CD4-positive, alpha-beta T cell (primary cell): ENCODE measurements at regions of chr1 and their contacts with region 1.

Region 1: DNA sequence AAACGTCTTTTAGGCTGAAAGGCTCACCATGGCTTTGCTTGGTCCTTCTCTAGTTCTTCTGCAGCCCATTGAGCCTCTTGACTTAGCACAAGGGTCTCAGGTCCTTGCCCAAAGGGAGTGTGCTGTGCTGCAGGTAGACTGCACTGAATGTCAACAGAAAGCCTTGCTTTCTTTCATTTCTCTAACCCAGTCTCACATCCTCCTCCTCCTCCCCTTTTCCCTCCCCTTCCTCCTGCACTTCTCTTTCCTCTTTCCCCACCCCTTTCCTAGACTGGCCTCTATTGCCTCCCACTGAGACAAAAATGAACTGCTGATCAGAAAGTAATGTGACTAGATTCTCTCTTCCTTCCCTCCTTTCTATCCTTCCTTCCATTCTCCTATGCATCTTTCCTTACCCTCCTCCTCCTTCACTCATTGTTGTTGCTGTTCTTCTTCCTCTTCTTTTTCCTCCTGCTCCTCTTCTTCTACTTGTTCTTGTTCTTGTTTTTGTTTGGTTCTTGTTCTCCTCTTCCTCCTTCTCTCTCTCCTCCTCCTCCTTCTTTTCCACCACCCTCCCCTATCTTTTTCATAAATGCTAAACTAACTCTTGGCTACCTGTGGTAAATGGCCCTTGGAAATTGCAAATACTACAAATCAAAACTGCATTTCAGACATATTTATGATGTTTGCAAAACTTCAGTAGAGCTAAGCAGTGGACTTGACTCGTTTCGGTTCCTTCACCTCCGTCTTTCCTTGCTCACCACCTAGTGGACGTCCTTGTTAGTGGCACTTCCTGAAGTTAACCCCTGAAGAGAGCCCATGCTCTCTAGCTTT is at the start of gene SELL:
- DNase-seq: peak; percentile 53 to 90 (median 70)
- ATAC-seq: peak; percentile 67
- H3K4me3 ChIP-seq: peak within 1 kb of the TSS; percentile 58
- H3K4me3 Mint-ChIP-seq: peak within 1 kb of the TSS; percentile 93
- H3K27ac ChIP-seq: peak within 1 kb of the TSS; percentile 56 to 74
- H3K27ac Mint-ChIP-seq: no peak within 1 kb of the TSS
- H3K4me1 ChIP-seq: peaks cover 6% of the 10 kb centered on the region
- H3K4me1 Mint-ChIP-seq: peaks cover 22% of the 10 kb centered on the region
- H3K27me3 ChIP-seq: no peaks in the 10 kb centered on the region
- H3K27me3 Mint-ChIP-seq: no peaks in the 10 kb centered on the region
- CTCF ChIP-seq: peak; percentile 89
- total RNA-seq, gene SELL: 204 to 216 TPM

Region 2: GRCh38 chr1:169485544-169486278 is 226.0 kb before region 1 on chr1 and contains the start of gene SLC19A2:
- CTCF ChIA-PET with region 1: interaction called, 3 read pairs
- POLR2A ChIA-PET with region 1: no interaction called
- intact Hi-C with region 1: loop called (anchors 5 to 10 kb)
- DNase-seq: peak; percentile 82 to 97 (median 90)
- ATAC-seq: peak; percentile 99
- H3K4me3 ChIP-seq: peak within 1 kb of the TSS; percentile 73
- H3K4me3 Mint-ChIP-seq: peak within 1 kb of the TSS; percentile 98
- H3K27ac ChIP-seq: peak within 1 kb of the TSS; percentile 54 to 65
- H3K27ac Mint-ChIP-seq: peak within 1 kb of the TSS; percentile 92
- H3K4me1 ChIP-seq: peaks cover 20% of the 10 kb centered on the region
- H3K4me1 Mint-ChIP-seq: peaks cover 48% of the 10 kb centered on the region
- H3K27me3 ChIP-seq: no peaks in the 10 kb centered on the region
- H3K27me3 Mint-ChIP-seq: no peaks in the 10 kb centered on the region
- CTCF ChIP-seq: peak; percentile 44
- total RNA-seq, gene SLC19A2: 3.6 to 3.7 TPM

Region 3: GRCh38 chr1:169586395-169587255 is 125.0 kb before region 1 on chr1 and contains the start of gene F5:
- CTCF ChIA-PET with region 1: interaction called, 38 read pairs
- POLR2A ChIA-PET with region 1: interaction called, 23 read pairs
- intact Hi-C with region 1: loop called (anchors 1 kb)
- DNase-seq: peak; percentile 65 to 88 (median 72)
- ATAC-seq: peak; percentile 99
- H3K4me3 ChIP-seq: peak within 1 kb of the TSS; percentile 64
- H3K4me3 Mint-ChIP-seq: peak within 1 kb of the TSS; percentile 91
- H3K27ac ChIP-seq: no peak within 1 kb of the TSS
- H3K27ac Mint-ChIP-seq: peak within 1 kb of the TSS; percentile 71
- H3K4me1 ChIP-seq: peaks cover 19% of the 10 kb centered on the region
- H3K4me1 Mint-ChIP-seq: peaks cover 53% of the 10 kb centered on the region
- H3K27me3 ChIP-seq: no peaks in the 10 kb centered on the region
- H3K27me3 Mint-ChIP-seq: no peaks in the 10 kb centered on the region
- CTCF ChIP-seq: peak; percentile 71
- total RNA-seq, gene F5: 5.4 to 6.2 TPM

Region 4: GRCh38 chr1:169601093-169601881 is 110.4 kb before region 1 on chr1:
- CTCF ChIA-PET with region 1: interaction called, 78 read pairs
- POLR2A ChIA-PET with region 1: interaction called, 102 read pairs
- intact Hi-C with region 1: loop called (anchors 1 kb)
- DNase-seq: peak in 3 of 14 experiments; percentile 49 to 59 (median 57)
- ATAC-seq: no peak
- H3K4me3 ChIP-seq: no peak overlapping the region
- H3K4me3 Mint-ChIP-seq: peak overlapping the region; percentile 7
- H3K27ac ChIP-seq: peak overlapping the region in 1 of 2 donors; percentile 9
- H3K27ac Mint-ChIP-seq: peak overlapping the region; percentile 77
- H3K4me1 ChIP-seq: peaks cover 40% of the 10 kb centered on the region
- H3K4me1 Mint-ChIP-seq: peaks cover 55% of the 10 kb centered on the region
- H3K27me3 ChIP-seq: no peaks in the 10 kb centered on the region
- H3K27me3 Mint-ChIP-seq: no peaks in the 10 kb centered on the region
- CTCF ChIP-seq: peak; percentile 84

Region 5: DNA sequence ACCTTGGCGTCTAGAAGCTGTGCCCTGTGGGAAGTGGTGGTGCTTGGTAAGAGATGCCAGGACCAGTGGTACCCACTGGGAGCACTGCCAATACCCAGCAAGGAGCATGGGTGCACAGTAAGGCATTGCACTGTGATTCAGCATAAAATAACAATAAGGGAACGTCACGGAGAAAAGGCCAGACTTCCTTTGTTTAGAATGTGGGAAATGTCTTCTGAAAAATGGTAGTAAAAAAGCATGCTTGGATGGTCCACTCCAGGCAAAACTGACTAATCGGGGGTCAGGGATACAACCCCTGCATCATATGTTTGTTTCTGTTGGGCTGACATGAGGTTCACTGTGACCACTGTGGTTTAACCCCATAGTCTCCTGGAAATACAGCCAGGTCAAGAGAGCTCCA is 68.3 kb after region 1 on chr1:
- CTCF ChIA-PET with region 1: no interaction called
- POLR2A ChIA-PET with region 1: no interaction called
- intact Hi-C with region 1: no loop called
- DNase-seq: no peak
- ATAC-seq: no peak
- H3K4me3 ChIP-seq: no peak overlapping the region
- H3K4me3 Mint-ChIP-seq: no peak overlapping the region
- H3K27ac ChIP-seq: no peak overlapping the region
- H3K27ac Mint-ChIP-seq: no peak overlapping the region
- H3K4me1 ChIP-seq: no peaks in the 10 kb centered on the region
- H3K4me1 Mint-ChIP-seq: no peaks in the 10 kb centered on the region
- H3K27me3 ChIP-seq: peaks cover 2 to 23% of the 10 kb centered on the region in 2 experiments
- H3K27me3 Mint-ChIP-seq: peaks cover 22% of the 10 kb centered on the region
- CTCF ChIP-seq: no peak

Region 6: DNA sequence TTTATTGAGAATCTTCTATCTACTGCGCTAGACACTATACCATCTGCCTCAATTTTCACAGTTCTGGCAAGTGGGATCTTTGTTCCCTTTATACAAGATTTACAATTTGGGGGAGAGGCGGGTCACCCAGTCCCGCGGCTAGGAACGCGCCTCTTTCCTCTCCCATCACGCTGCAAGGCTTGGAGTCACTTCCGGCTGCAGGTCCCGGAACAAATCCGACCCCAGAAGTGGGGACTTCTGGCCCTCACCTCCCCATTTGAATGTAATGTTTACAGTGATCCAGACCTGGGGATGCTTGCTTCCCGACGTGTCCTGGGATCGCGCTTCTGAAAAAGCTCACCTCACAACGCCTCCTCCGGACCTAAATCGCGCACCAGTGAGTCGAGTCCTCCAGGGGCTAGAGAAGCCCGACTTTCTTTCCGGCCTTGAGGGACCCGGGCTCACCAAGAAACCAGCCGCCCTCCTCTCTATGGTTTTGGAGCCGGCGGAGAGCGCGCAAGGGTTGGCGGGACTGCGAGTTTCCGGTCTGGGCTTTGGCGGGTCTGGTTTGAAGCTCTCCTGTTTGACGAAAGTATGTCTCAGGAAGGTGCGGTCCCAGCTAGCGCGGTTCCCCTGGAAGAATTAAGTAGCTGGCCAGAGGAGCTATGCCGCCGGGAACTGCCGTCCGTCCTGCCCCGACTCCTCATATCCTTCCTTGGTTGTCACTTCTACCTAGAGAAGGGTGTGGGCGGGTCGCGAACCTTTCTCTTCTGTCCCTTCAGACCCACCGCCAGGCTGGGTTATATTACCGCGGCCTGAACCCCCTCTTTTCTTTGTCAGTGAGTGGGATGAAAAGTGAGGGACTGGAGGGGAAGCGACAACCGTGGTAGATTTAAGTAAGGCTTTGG is 83.1 kb after region 1 on chr1 and contains the start of gene METTL18:
- CTCF ChIA-PET with region 1: interaction called, 3 read pairs
- POLR2A ChIA-PET with region 1: interaction called, 9 read pairs
- intact Hi-C with region 1: loop called in 1 of 2 experiments (anchors 5 kb)
- DNase-seq: peak; percentile 82 to 96 (median 88)
- ATAC-seq: peak; percentile 97
- H3K4me3 ChIP-seq: peak within 1 kb of the TSS; percentile 81
- H3K4me3 Mint-ChIP-seq: peak within 1 kb of the TSS; percentile 99
- H3K27ac ChIP-seq: peak within 1 kb of the TSS; percentile 89 to 94
- H3K27ac Mint-ChIP-seq: peak within 1 kb of the TSS; percentile 94
- H3K4me1 ChIP-seq: peaks cover 13% of the 10 kb centered on the region
- H3K4me1 Mint-ChIP-seq: peaks cover 52% of the 10 kb centered on the region
- H3K27me3 ChIP-seq: no peaks in the 10 kb centered on the region
- H3K27me3 Mint-ChIP-seq: no peaks in the 10 kb centered on the region
- CTCF ChIP-seq: no peak
- total RNA-seq, gene METTL18: 5.1 to 5.6 TPM